A673 (cell line): ENCODE measurements at regions of chr12 and their contacts with region 1.

Region 1: DNA sequence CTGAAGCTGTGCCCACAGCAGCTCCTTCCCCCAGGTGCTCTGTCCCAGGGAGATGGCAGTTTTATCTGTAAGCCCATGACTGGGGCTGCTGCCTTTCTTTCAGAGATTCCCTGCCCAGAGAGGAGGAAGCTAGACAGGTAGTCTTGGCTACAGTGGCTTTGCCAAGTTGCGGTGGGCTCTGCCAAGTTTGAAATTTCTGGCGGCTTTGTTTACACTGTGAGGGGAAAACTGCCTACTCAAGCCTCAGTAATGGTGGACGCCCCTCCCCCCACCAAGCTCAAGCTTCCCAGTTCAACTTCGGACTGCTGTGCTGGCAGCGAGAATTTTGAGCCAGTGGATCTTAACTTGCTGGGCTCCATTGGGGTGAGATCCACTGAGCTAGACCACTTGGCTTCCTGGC is 124.7 kb downstream of the MSRB3 start:
- DNase-seq: no peak
- H3K4me3 ChIP-seq: no peak overlapping the region
- H3K27ac ChIP-seq: no peak overlapping the region
- H3K4me1 ChIP-seq: no peaks in the 10 kb centered on the region
- H3K27me3 ChIP-seq: no peaks in the 10 kb centered on the region
- CTCF ChIP-seq: no peak

Region 2: GRCh38 chr12:64759035-64759901 is 643.9 kb before region 1 on chr12 and contains the start of gene GNS:
- CTCF ChIA-PET with region 1: no interaction called
- POLR2A ChIA-PET with region 1: interaction called, 17 read pairs
- intact Hi-C with region 1: no loop called
- DNase-seq: peak; percentile 93
- H3K4me3 ChIP-seq: peak within 1 kb of the TSS; percentile 84
- H3K27ac ChIP-seq: peak within 1 kb of the TSS; percentile 64
- H3K4me1 ChIP-seq: no peaks in the 10 kb centered on the region
- H3K27me3 ChIP-seq: no peaks in the 10 kb centered on the region
- CTCF ChIP-seq: no peak
- total RNA-seq, gene GNS: 50.1 and 57.5 TPM in 2 replicates

Region 3: DNA sequence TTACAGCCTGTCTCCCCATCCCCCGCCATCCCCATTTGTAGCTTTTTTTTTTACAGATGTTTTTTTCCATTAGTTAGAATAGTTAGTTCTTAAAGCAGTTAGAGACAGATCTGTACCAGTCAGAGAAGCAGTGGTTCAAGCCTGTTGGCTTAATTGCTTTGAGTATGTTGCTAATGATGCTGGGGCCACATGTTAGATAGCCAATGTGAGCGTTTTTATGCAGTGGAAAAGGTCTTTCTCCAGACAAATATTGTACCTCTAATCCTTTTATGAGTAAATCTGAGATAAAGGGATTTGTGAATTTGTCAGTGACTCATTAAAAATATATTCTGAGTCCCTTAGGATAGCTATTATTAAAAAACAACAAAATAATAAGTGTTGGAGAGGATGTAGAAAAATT is 29.4 kb after region 1 on chr12:
- CTCF ChIA-PET with region 1: no interaction called
- POLR2A ChIA-PET with region 1: no interaction called
- intact Hi-C with region 1: no loop called
- DNase-seq: no peak
- H3K4me3 ChIP-seq: no peak overlapping the region
- H3K27ac ChIP-seq: no peak overlapping the region
- H3K4me1 ChIP-seq: peaks cover 34% of the 10 kb centered on the region
- H3K27me3 ChIP-seq: no peaks in the 10 kb centered on the region
- CTCF ChIP-seq: no peak